ENCODE measurements at regions of chr5 and their contacts with region 1.

Region 1: GRCh38 chr5:157415838-157416237 is 44.2 kb upstream of the NIPAL4 start:
- DNase-seq: no peak
- H3K4me3 ChIP-seq: no peak overlapping the region
- H3K4me3 Mint-ChIP-seq: no peak overlapping the region
- H3K27ac Mint-ChIP-seq: no peak overlapping the region
- H3K4me1 ChIP-seq: no peaks in the 10 kb centered on the region
- H3K4me1 Mint-ChIP-seq: peaks cover 7% of the 10 kb centered on the region
- H3K27me3 ChIP-seq: no peaks in the 10 kb centered on the region
- H3K27me3 Mint-ChIP-seq: no peaks in the 10 kb centered on the region
- CTCF ChIP-seq: no peak

Region 2: DNA sequence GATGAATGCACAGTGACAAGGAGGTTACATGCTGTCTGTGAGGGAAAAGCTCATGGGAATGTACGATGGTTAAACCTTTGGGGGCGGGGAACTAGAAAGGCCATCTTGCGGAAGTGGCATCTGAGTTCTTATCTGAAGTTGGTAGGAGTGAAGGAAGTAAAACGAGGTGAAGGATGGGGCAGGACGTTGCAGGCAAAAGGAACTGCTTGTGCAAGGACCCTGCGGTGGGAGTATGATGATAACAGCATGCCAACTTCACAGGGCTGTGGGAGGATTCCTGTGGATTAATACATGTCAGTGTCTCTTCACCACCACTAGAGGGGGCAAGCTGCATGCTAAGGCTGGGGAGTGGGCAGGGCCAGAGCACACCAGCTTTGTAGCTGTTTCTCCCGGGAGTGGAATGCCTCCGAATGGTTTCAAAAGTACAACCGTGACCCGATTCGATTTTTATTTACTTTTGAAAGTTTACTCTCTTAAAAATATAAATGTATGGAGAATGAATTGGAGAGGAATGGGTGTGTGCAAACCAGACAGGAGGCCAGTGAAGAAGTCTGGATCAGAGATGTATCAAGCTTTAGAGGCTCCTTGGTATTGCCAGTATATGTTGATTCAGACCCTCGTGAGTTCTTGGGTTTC is 87.4 kb before region 1 on chr5:
- CTCF ChIA-PET with region 1: no interaction called
- POLR2A ChIA-PET with region 1: no interaction called
- intact Hi-C with region 1: no loop called
- DNase-seq: peak; percentile 68 to 78
- H3K4me3 ChIP-seq: 0 out of 2 replicates have a peak overlapping the region, but pooled peaks have one; percentile 10
- H3K4me3 Mint-ChIP-seq: peak overlapping the region; percentile 39
- H3K27ac Mint-ChIP-seq: no peak overlapping the region
- H3K4me1 ChIP-seq: peaks cover 30% of the 10 kb centered on the region
- H3K4me1 Mint-ChIP-seq: peaks cover 21% of the 10 kb centered on the region
- H3K27me3 ChIP-seq: no peaks in the 10 kb centered on the region
- H3K27me3 Mint-ChIP-seq: no peaks in the 10 kb centered on the region
- CTCF ChIP-seq: peak; percentile 86 to 94

Region 3: GRCh38 chr5:157390551-157391297 is 25.1 kb before region 1 on chr5:
- CTCF ChIA-PET with region 1: no interaction called
- POLR2A ChIA-PET with region 1: no interaction called
- intact Hi-C with region 1: loop called (anchors 1 kb)
- DNase-seq: peak; percentile 68 to 79
- H3K4me3 ChIP-seq: no peak overlapping the region
- H3K4me3 Mint-ChIP-seq: no peak overlapping the region
- H3K27ac Mint-ChIP-seq: peak overlapping the region; percentile 45
- H3K4me1 ChIP-seq: peaks cover 23% of the 10 kb centered on the region
- H3K4me1 Mint-ChIP-seq: peaks cover 22% of the 10 kb centered on the region
- H3K27me3 ChIP-seq: no peaks in the 10 kb centered on the region
- H3K27me3 Mint-ChIP-seq: no peaks in the 10 kb centered on the region
- CTCF ChIP-seq: no peak

Measured in Caco-2 (cell line).